ENCODE measurements at regions of chr7 and their contacts with region 1.

Region 1: DNA sequence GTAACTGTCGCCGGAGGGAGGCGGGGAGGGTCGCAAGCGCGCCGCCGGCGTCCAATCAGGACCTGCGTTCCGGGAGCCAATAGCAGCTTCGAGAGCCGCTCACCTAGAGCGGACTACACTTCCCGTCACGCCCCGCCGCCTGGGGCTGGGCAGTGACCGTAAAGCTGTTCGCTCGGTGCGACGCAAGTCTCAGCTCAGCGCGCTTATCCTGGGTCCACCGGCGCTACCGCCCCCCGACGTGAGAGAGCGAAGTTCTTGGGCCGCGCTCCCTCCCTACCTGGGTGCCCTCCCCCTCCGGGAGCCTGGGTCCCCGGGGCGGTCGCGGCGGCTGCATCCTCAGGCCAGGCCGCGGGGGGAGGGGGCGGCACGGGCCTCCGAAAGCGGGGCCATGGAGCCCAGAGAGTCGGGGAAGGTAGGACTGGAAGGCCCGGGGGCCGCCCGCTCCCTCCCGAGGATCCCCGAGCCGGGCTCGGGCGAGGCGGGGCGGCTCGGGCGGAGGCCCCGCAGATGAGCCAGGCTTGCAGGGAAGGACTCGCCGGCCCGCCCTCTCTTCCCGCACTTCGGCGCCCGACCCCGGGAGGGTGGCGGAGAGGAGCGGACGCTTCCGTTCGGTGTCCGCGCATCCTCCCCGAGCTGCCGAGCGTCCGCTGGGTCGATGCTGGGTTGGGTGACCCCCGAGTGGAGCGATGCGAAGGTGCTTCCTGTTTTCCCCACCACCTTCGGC is at the start of gene ZNF862:
- DNase-seq: peak; percentile 95 to 98
- H3K4me3 ChIP-seq: peak within 1 kb of the TSS; percentile 99
- H3K27ac ChIP-seq: no peak within 1 kb of the TSS
- H3K4me1 ChIP-seq: peaks cover 9% of the 10 kb centered on the region
- H3K27me3 ChIP-seq: peaks cover 16% of the 10 kb centered on the region
- CTCF ChIP-seq: no peak; the same call in 1 of the 2 replicates
- total RNA-seq, gene ZNF862: 42.4 and 43.6 TPM in 2 replicates

Region 2: GRCh38 chr7:148877517-148877916 is 960.9 kb before region 1 on chr7:
- CTCF ChIA-PET with region 1: no interaction called
- POLR2A ChIA-PET with region 1: no interaction called
- intact Hi-C with region 1: no loop called
- DNase-seq: no peak
- H3K4me3 ChIP-seq: no peak overlapping the region
- H3K27ac ChIP-seq: no peak overlapping the region
- H3K4me1 ChIP-seq: peaks cover 13% of the 10 kb centered on the region
- H3K27me3 ChIP-seq: no peaks in the 10 kb centered on the region
- CTCF ChIP-seq: no peak

Region 3: GRCh38 chr7:149855361-149856305 is 17.2 kb after region 1 on chr7:
- CTCF ChIA-PET with region 1: interaction called, 4 read pairs
- POLR2A ChIA-PET with region 1: no interaction called
- intact Hi-C with region 1: loop called (anchors 1 kb)
- DNase-seq: peak; percentile 78 to 83
- H3K4me3 ChIP-seq: no peak overlapping the region
- H3K27ac ChIP-seq: peak overlapping the region; percentile 30; the same call in 1 of the 2 replicates
- H3K4me1 ChIP-seq: peaks cover 21% of the 10 kb centered on the region
- H3K27me3 ChIP-seq: no peaks in the 10 kb centered on the region
- CTCF ChIP-seq: no peak

Region 4: DNA sequence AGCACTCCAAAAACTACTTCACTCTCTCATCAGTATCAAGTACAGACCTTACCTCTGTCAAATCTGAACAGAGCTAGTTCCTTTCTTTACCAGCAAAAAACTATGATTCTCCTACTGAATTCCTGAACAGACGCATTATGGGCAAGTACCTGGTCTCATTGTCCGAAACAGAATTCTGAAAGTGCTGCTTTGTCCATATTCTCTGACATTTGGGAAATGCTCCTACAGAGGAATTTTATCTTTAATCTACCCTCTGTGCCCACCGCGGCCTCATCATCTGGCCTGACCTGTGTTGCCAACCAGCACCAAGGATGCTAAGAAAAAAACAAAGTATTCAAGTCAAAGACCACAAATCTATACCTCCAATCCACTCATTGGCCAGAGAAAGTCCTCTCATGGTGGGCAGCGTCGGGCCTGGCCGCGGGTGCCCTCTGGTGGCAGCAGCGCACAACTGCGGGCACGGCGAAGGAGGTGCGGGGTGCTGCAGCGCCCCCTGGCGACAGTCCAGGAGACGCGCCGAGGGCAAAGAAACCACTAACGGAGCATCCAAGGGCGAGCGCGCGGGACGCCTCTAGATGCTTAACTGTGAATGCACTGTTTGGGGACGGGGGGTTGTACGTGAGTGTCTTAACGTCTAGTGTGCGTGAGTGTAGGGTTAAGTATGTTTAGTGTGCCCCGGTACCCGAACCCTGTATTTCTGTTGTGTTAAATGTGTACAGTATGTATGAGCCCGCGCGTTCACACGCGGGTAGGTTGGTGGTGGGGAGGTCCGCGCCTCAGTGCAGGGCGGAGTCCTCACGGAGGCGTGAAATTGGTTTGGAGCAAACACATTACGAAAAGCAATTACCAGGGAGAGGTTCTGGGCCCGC is 1334.1 kb after region 1 on chr7:
- CTCF ChIA-PET with region 1: no interaction called
- POLR2A ChIA-PET with region 1: no interaction called
- intact Hi-C with region 1: no loop called
- DNase-seq: peak; percentile 46 to 82
- H3K4me3 ChIP-seq: no peak overlapping the region
- H3K27ac ChIP-seq: no peak overlapping the region
- H3K4me1 ChIP-seq: no peaks in the 10 kb centered on the region
- H3K27me3 ChIP-seq: peaks cover 61% of the 10 kb centered on the region
- CTCF ChIP-seq: peak; percentile 100

Measured in PC-9 (cell line).